ENCODE measurements at regions of chr1 and their contacts with region 1.

Region 1: GRCh38 chr1:50968158-50968820 is 1.8 kb upstream of the CDKN2C start:
- DNase-seq: peak; percentile 59 to 94 (median 76)
- ATAC-seq: peak; percentile 80
- H3K4me3 ChIP-seq: peak overlapping the region; percentile 90
- H3K4me3 Mint-ChIP-seq: peak overlapping the region; percentile 100
- H3K27ac ChIP-seq: peak overlapping the region; percentile 82 to 89
- H3K27ac Mint-ChIP-seq: peak overlapping the region; percentile 89
- H3K4me1 ChIP-seq: peaks cover 19% of the 10 kb centered on the region
- H3K4me1 Mint-ChIP-seq: peaks cover 26% of the 10 kb centered on the region
- H3K27me3 ChIP-seq: no peaks in the 10 kb centered on the region
- H3K27me3 Mint-ChIP-seq: no peaks in the 10 kb centered on the region
- CTCF ChIP-seq: peak; percentile 39

Region 2: GRCh38 chr1:50929376-50929958 is 38.8 kb before region 1 on chr1:
- CTCF ChIA-PET with region 1: interaction called, 13 read pairs
- POLR2A ChIA-PET with region 1: interaction called, 10 read pairs
- intact Hi-C with region 1: loop called (anchors 2 to 5 kb)
- DNase-seq: peak in 3 of 14 experiments; percentile 39 to 50 (median 46)
- ATAC-seq: no peak
- H3K4me3 ChIP-seq: no peak overlapping the region
- H3K4me3 Mint-ChIP-seq: no peak overlapping the region
- H3K27ac ChIP-seq: no peak overlapping the region
- H3K27ac Mint-ChIP-seq: no peak overlapping the region
- H3K4me1 ChIP-seq: no peaks in the 10 kb centered on the region
- H3K4me1 Mint-ChIP-seq: peaks cover 25% of the 10 kb centered on the region
- H3K27me3 ChIP-seq: no peaks in the 10 kb centered on the region
- H3K27me3 Mint-ChIP-seq: no peaks in the 10 kb centered on the region
- CTCF ChIP-seq: peak; percentile 69

Region 3: GRCh38 chr1:50978144-50978851 is 10.0 kb after region 1 on chr1:
- CTCF ChIA-PET with region 1: interaction called, 10 read pairs
- POLR2A ChIA-PET with region 1: interaction called, 82 read pairs
- intact Hi-C with region 1: loop called in 1 of 2 experiments (anchors 1 kb)
- DNase-seq: peak in 6 of 14 experiments; percentile 8 to 65 (median 38)
- ATAC-seq: peak; percentile 29
- H3K4me3 ChIP-seq: peak overlapping the region; percentile 73
- H3K4me3 Mint-ChIP-seq: peak overlapping the region; percentile 92
- H3K27ac ChIP-seq: no peak overlapping the region
- H3K27ac Mint-ChIP-seq: peak overlapping the region; percentile 67
- H3K4me1 ChIP-seq: peaks cover 23% of the 10 kb centered on the region
- H3K4me1 Mint-ChIP-seq: peaks cover 27% of the 10 kb centered on the region
- H3K27me3 ChIP-seq: peaks cover 4 to 10% of the 10 kb centered on the region in 2 experiments
- H3K27me3 Mint-ChIP-seq: peaks cover 24% of the 10 kb centered on the region
- CTCF ChIP-seq: no peak